ENCODE measurements at regions of chr6 and their contacts with region 1.

Region 1: GRCh38 chr6:152669895-152670294 is 27.8 kb upstream of the MYCT1 start:
- DNase-seq: peak; percentile 40
- H3K4me3 ChIP-seq: no peak overlapping the region
- H3K27ac ChIP-seq: no peak overlapping the region
- H3K4me1 ChIP-seq: no peaks in the 10 kb centered on the region
- H3K27me3 ChIP-seq: no peaks in the 10 kb centered on the region
- CTCF ChIP-seq: peak; percentile 55

Region 2: GRCh38 chr6:152484806-152485205 is 185.1 kb before region 1 on chr6:
- CTCF ChIA-PET with region 1: no interaction called
- POLR2A ChIA-PET with region 1: no interaction called
- intact Hi-C with region 1: loop called (anchors 2 kb)
- DNase-seq: no peak
- H3K4me3 ChIP-seq: no peak overlapping the region
- H3K27ac ChIP-seq: no peak overlapping the region
- H3K4me1 ChIP-seq: no peaks in the 10 kb centered on the region
- H3K27me3 ChIP-seq: no peaks in the 10 kb centered on the region
- CTCF ChIP-seq: no peak

Measured in A673 (cell line).